Heart right ventricle (tissue), 16 donors: ENCODE measurements at regions of chrX and their contacts with region 1.

Region 1: GRCh38 chrX:76279000-76279399 is 106.1 kb downstream of the PBDC1 start:
- DNase-seq: peak in 1 of 2 donors; percentile 8
- ATAC-seq: peak in 1 of 8 donors; percentile 63
- H3K4me3 ChIP-seq: no peak overlapping the region
- H3K27ac ChIP-seq: no peak overlapping the region
- H3K4me1 ChIP-seq: no peaks in the 10 kb centered on the region
- H3K27me3 ChIP-seq: peaks cover 0 to 19% (median 0%) of the 10 kb centered on the region in 7 donors
- CTCF ChIP-seq: peak; percentile 18 to 72 (median 62)

Region 2: GRCh38 chrX:76172325-76172893 is 106.6 kb before region 1 on chrX:
- intact Hi-C with region 1: no loop called
- DNase-seq: no peak
- ATAC-seq: peak; percentile 46 to 75 (median 62)
- H3K4me3 ChIP-seq: peak overlapping the region in 9 of 10 donors; percentile 43 to 77 (median 70)
- H3K27ac ChIP-seq: peak overlapping the region in 9 of 10 donors; percentile 63 to 91 (median 83)
- H3K4me1 ChIP-seq: peaks cover 0 to 22% (median 13%) of the 10 kb centered on the region in 9 donors
- H3K27me3 ChIP-seq: peaks cover 0 to 73% (median 0%) of the 10 kb centered on the region in 7 donors
- CTCF ChIP-seq: no peak

Region 3: GRCh38 chrX:76454456-76454927 is 175.5 kb after region 1 on chrX:
- intact Hi-C with region 1: loop called in 6 of 10 experiments (anchors 2 to 10 kb)
- DNase-seq: no peak
- ATAC-seq: peak in 1 of 8 donors; percentile 31
- H3K4me3 ChIP-seq: no peak overlapping the region
- H3K27ac ChIP-seq: no peak overlapping the region
- H3K4me1 ChIP-seq: no peaks in the 10 kb centered on the region
- H3K27me3 ChIP-seq: peaks cover 0 to 32% (median 0%) of the 10 kb centered on the region in 7 donors
- CTCF ChIP-seq: peak in 8 of 9 donors; percentile 21 to 64 (median 50)

Region 4: DNA sequence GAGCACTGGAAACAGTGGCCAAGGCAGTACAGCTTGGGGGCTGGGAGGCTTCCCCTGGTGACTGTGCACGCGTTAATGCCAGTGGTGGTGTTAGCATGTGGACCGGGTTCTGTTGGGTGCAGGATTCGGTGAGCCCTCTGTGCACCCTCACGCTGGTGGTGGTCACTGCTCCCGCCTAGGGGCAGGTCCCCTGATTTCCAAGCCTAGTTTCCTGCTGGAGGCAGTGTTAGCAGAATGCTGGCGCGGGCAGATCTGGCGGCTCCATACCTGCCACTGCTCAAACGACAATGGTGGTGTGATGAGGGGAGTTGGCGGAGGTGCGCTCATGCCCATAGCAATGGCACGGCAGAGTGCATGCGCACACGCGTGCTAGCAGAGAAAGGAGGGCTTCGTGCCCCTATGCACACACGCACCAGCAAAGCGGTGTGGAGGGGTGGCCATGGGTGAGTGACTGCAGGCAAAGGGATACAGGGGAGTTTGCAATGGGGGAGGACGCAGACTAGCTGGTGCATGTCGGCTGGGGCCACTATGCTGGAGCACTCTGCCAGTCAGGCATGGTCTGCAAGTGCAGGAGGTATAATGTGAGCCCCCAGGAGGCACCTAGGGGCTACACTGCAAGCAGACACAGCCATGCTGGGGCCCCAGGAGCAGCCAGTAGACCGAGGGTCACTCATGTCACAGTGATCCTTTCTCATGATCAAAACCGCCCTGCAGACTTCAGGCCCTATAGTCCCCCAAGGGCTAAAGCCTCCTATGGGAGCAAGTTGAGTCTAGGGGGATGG is 241.5 kb after region 1 on chrX:
- intact Hi-C with region 1: no loop called
- DNase-seq: no peak
- ATAC-seq: no peak
- H3K4me3 ChIP-seq: no peak overlapping the region
- H3K27ac ChIP-seq: no peak overlapping the region
- H3K4me1 ChIP-seq: no peaks in the 10 kb centered on the region
- H3K27me3 ChIP-seq: no peaks in the 10 kb centered on the region
- CTCF ChIP-seq: no peak

Region 5: GRCh38 chrX:76692507-76692906 is 413.5 kb after region 1 on chrX:
- intact Hi-C with region 1: no loop called
- DNase-seq: no peak
- ATAC-seq: no peak
- H3K4me3 ChIP-seq: no peak overlapping the region
- H3K27ac ChIP-seq: no peak overlapping the region
- H3K4me1 ChIP-seq: no peaks in the 10 kb centered on the region
- H3K27me3 ChIP-seq: no peaks in the 10 kb centered on the region
- CTCF ChIP-seq: peak in 2 of 9 donors; percentile 20 to 27

Region 6: DNA sequence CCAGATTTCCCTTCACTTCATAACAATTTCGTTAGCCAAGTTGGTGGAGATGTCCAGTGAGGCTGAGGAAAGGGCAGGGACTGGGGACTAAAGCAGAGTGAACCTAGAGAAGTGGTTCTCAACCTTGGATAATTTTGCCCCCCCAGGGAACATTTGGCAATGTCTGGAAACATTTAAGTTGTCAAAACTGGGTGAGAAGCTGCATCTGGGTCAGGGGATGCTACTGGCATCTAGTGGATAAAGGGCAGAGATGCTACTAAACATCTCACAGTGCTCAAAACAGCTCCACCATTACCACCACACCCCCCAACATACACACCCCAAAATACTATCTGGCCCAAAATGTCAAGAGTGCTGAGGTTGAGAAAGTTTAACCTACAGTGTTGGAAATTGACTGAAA is 1136.2 kb after region 1 on chrX:
- intact Hi-C with region 1: loop called in 1 of 10 experiments (anchors 10 kb)
- DNase-seq: no peak
- ATAC-seq: no peak
- H3K4me3 ChIP-seq: no peak overlapping the region
- H3K27ac ChIP-seq: no peak overlapping the region
- H3K4me1 ChIP-seq: peaks cover 0 to 9% (median 0%) of the 10 kb centered on the region in 9 donors
- H3K27me3 ChIP-seq: peaks cover 0 to 14% (median 0%) of the 10 kb centered on the region in 7 donors
- CTCF ChIP-seq: peak in 5 of 9 donors; percentile 9 to 40 (median 24)